ENCODE measurements at regions of chr1 and their contacts with region 1.

Region 1: GRCh38 chr1:206612129-206612876 is at the start of gene EIF2D:
- DNase-seq: peak; percentile 88 to 97 (median 94)
- ATAC-seq: peak; percentile 98
- H3K4me3 ChIP-seq: peak within 1 kb of the TSS; percentile 88
- H3K4me3 Mint-ChIP-seq: peak within 1 kb of the TSS; percentile 90
- H3K27ac ChIP-seq: peak within 1 kb of the TSS; percentile 51 to 78
- H3K27ac Mint-ChIP-seq: peak within 1 kb of the TSS; percentile 83
- H3K4me1 ChIP-seq: peaks cover 18% of the 10 kb centered on the region
- H3K4me1 Mint-ChIP-seq: peaks cover 20% of the 10 kb centered on the region
- H3K27me3 ChIP-seq: no peaks in the 10 kb centered on the region
- H3K27me3 Mint-ChIP-seq: no peaks in the 10 kb centered on the region
- CTCF ChIP-seq: peak; percentile 95
- total RNA-seq, gene EIF2D: 48.9 to 51.6 TPM

Region 2: DNA sequence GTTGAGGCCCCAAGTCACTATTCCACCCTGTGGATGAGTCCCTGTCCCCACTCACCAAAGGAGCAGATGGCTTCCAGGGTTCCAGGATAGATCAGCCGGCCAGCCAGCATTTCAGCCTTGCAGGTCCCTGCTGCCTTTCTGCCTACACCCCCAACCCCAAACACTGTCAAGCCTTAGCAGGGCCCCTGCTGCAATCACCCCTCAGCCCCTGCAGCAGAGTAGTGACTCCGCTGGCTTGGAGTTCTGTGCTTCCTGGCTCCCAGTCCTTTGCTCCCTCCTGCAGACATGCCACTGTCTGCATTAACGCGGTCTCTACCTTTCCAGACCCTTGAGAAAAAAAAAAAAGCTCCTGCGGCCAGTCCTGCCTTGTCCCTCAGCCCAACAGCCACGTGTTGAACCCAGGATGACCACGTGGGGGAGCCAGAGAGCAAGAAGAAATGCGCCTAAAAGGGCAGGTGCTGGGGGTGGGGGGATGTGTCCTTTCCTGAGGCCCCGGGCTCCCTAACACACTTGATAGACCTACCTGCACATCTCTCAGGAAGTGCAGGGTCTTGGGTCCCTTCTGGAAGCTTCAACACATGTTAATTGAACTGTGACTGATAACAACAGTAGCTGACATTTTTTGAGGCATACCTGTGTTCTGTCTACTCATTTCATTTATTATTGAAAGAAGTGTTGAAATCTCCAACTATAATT is 67.6 kb before region 1 on chr1:
- CTCF ChIA-PET with region 1: interaction called, 16 read pairs
- POLR2A ChIA-PET with region 1: interaction called, 7 read pairs
- intact Hi-C with region 1: no loop called
- DNase-seq: peak; percentile 68 to 89 (median 81)
- ATAC-seq: peak; percentile 96
- H3K4me3 ChIP-seq: no peak overlapping the region
- H3K4me3 Mint-ChIP-seq: no peak overlapping the region
- H3K27ac ChIP-seq: no peak overlapping the region
- H3K27ac Mint-ChIP-seq: no peak overlapping the region
- H3K4me1 ChIP-seq: peaks cover 11% of the 10 kb centered on the region
- H3K4me1 Mint-ChIP-seq: peaks cover 24% of the 10 kb centered on the region
- H3K27me3 ChIP-seq: no peaks in the 10 kb centered on the region
- H3K27me3 Mint-ChIP-seq: no peaks in the 10 kb centered on the region
- CTCF ChIP-seq: peak; percentile 95

Region 3: GRCh38 chr1:206556750-206557635 is 55.3 kb before region 1 on chr1:
- CTCF ChIA-PET with region 1: interaction called, 11 read pairs
- POLR2A ChIA-PET with region 1: interaction called, 8 read pairs
- intact Hi-C with region 1: loop called in 1 of 2 experiments (anchors 1 kb)
- DNase-seq: peak; percentile 72 to 96 (median 90)
- ATAC-seq: peak; percentile 69
- H3K4me3 ChIP-seq: peak overlapping the region; percentile 94
- H3K4me3 Mint-ChIP-seq: peak overlapping the region; percentile 97
- H3K27ac ChIP-seq: peak overlapping the region; percentile 69 to 99
- H3K27ac Mint-ChIP-seq: peak overlapping the region; percentile 86
- H3K4me1 ChIP-seq: peaks cover 77% of the 10 kb centered on the region
- H3K4me1 Mint-ChIP-seq: peaks cover 86% of the 10 kb centered on the region
- H3K27me3 ChIP-seq: no peaks in the 10 kb centered on the region
- H3K27me3 Mint-ChIP-seq: no peaks in the 10 kb centered on the region
- CTCF ChIP-seq: no peak

Region 4: GRCh38 chr1:206590025-206590758 is 22.1 kb before region 1 on chr1:
- CTCF ChIA-PET with region 1: interaction called, 12 read pairs
- POLR2A ChIA-PET with region 1: interaction called, 3 read pairs
- intact Hi-C with region 1: no loop called
- DNase-seq: peak in 10 of 14 experiments; percentile 29 to 83 (median 58)
- ATAC-seq: peak; percentile 83
- H3K4me3 ChIP-seq: no peak overlapping the region
- H3K4me3 Mint-ChIP-seq: peak overlapping the region; percentile 22
- H3K27ac ChIP-seq: peak overlapping the region; percentile 39 to 55
- H3K27ac Mint-ChIP-seq: peak overlapping the region; percentile 85
- H3K4me1 ChIP-seq: peaks cover 41% of the 10 kb centered on the region
- H3K4me1 Mint-ChIP-seq: peaks cover 43% of the 10 kb centered on the region
- H3K27me3 ChIP-seq: no peaks in the 10 kb centered on the region
- H3K27me3 Mint-ChIP-seq: no peaks in the 10 kb centered on the region
- CTCF ChIP-seq: peak; percentile 37

Region 5: GRCh38 chr1:206635080-206635977 is 23.0 kb after region 1 on chr1 and contains the start of gene DYRK3:
- CTCF ChIA-PET with region 1: interaction called, 25 read pairs
- POLR2A ChIA-PET with region 1: interaction called, 15 read pairs
- intact Hi-C with region 1: loop called (anchors 2 kb)
- DNase-seq: peak; percentile 74 to 95 (median 85)
- ATAC-seq: peak; percentile 93
- H3K4me3 ChIP-seq: peak within 1 kb of the TSS; percentile 64
- H3K4me3 Mint-ChIP-seq: peak within 1 kb of the TSS; percentile 92
- H3K27ac ChIP-seq: peak within 1 kb of the TSS in 1 of 2 donors; percentile 52
- H3K27ac Mint-ChIP-seq: peak within 1 kb of the TSS; percentile 66
- H3K4me1 ChIP-seq: peaks cover 20% of the 10 kb centered on the region
- H3K4me1 Mint-ChIP-seq: peaks cover 18% of the 10 kb centered on the region
- H3K27me3 ChIP-seq: peaks cover 0 to 14% of the 10 kb centered on the region in 2 experiments
- H3K27me3 Mint-ChIP-seq: no peaks in the 10 kb centered on the region
- CTCF ChIP-seq: no peak
- total RNA-seq, gene DYRK3: 1.6 to 1.7 TPM

Region 6: GRCh38 chr1:206684478-206685333 is 72.4 kb after region 1 on chr1 and contains the start of gene MAPKAPK2:
- CTCF ChIA-PET with region 1: interaction called, 4 read pairs
- POLR2A ChIA-PET with region 1: interaction called, 3 read pairs
- intact Hi-C with region 1: loop called in 1 of 2 experiments (anchors 1 kb)
- DNase-seq: peak; percentile 58 to 89 (median 74)
- ATAC-seq: peak; percentile 75
- H3K4me3 ChIP-seq: peak within 1 kb of the TSS; percentile 91
- H3K4me3 Mint-ChIP-seq: peak within 1 kb of the TSS; percentile 98
- H3K27ac ChIP-seq: peak within 1 kb of the TSS; percentile 78 to 85
- H3K27ac Mint-ChIP-seq: peak within 1 kb of the TSS; percentile 96
- H3K4me1 ChIP-seq: peaks cover 37% of the 10 kb centered on the region
- H3K4me1 Mint-ChIP-seq: peaks cover 44% of the 10 kb centered on the region
- H3K27me3 ChIP-seq: no peaks in the 10 kb centered on the region
- H3K27me3 Mint-ChIP-seq: no peaks in the 10 kb centered on the region
- CTCF ChIP-seq: no peak
- total RNA-seq, gene MAPKAPK2: 157 to 166 TPM

Region 7: DNA sequence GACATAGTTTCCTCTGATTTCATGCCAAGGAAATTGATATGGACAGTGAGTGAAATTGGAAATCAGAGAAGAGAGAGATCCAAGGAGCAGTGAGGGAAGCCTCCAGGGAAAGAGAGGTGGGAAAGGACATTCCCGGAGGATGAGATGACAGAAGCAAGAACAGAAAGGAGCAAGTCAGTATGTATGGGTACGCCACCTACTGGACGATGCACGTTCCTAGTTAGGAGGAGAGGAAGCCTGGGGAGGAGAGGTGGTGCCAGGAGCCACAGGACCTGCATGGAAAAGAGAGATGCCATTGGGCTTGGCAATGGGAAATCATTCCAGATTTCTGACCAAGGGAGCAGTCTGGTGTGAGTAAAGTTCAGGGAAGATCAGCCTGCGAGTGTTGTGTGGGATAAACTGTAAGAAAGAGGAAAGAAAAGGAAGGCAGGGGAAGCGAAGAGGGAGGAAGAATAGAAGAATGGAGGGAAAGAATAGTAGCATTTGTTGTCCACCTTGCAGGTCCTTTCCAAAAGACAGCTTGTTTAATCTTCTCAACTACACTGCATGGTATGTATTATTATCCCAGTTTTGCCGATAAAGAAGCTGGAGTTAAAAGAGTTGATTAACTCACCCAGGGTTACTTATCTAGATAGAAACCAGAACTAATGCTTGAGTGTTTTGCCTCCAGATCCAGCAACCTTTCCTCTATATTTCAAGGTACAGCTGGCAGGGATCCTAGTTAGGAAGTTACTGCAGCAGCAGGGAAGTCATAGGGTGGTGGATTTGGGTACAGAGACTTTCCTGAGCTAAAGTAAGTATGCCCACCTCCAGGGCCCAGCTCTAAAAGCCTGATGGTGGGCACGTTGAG is 392.9 kb after region 1 on chr1:
- CTCF ChIA-PET with region 1: no interaction called
- POLR2A ChIA-PET with region 1: no interaction called
- intact Hi-C with region 1: no loop called
- DNase-seq: peak; percentile 7 to 63 (median 20)
- ATAC-seq: no peak
- H3K4me3 ChIP-seq: no peak overlapping the region
- H3K4me3 Mint-ChIP-seq: no peak overlapping the region
- H3K27ac ChIP-seq: no peak overlapping the region
- H3K27ac Mint-ChIP-seq: no peak overlapping the region
- H3K4me1 ChIP-seq: no peaks in the 10 kb centered on the region
- H3K4me1 Mint-ChIP-seq: no peaks in the 10 kb centered on the region
- H3K27me3 ChIP-seq: no peaks in the 10 kb centered on the region
- H3K27me3 Mint-ChIP-seq: peaks cover 3% of the 10 kb centered on the region
- CTCF ChIP-seq: peak; percentile 76

Measured in CD4-positive, alpha-beta T cell (primary cell).